Activated CD4-positive, alpha-beta T cell treated with anti-CD3 and anti-CD28 coated beads for 36 hours (primary cell): ENCODE measurements at regions of chr1 and their contacts with region 1.

Region 1: GRCh38 chr1:113759333-113760101 is at the start of gene PHTF1:
- DNase-seq: peak; percentile 77
- ATAC-seq: peak; percentile 81
- H3K4me3 Mint-ChIP-seq: peak within 1 kb of the TSS; percentile 81
- H3K27ac Mint-ChIP-seq: peak within 1 kb of the TSS; percentile 94
- H3K4me1 Mint-ChIP-seq: peaks cover 13% of the 10 kb centered on the region
- H3K27me3 Mint-ChIP-seq: no peaks in the 10 kb centered on the region
- total RNA-seq, gene PHTF1: 11.3 to 12.2 TPM

Region 2: GRCh38 chr1:113677250-113678158 is 82.0 kb before region 1 on chr1:
- CTCF ChIA-PET with region 1: no interaction called
- POLR2A ChIA-PET with region 1: no interaction called
- intact Hi-C with region 1: no loop called
- DNase-seq: no peak
- ATAC-seq: peak; percentile 39
- H3K4me3 Mint-ChIP-seq: no peak overlapping the region
- H3K27ac Mint-ChIP-seq: no peak overlapping the region
- H3K4me1 Mint-ChIP-seq: no peaks in the 10 kb centered on the region
- H3K27me3 Mint-ChIP-seq: no peaks in the 10 kb centered on the region

Region 3: DNA sequence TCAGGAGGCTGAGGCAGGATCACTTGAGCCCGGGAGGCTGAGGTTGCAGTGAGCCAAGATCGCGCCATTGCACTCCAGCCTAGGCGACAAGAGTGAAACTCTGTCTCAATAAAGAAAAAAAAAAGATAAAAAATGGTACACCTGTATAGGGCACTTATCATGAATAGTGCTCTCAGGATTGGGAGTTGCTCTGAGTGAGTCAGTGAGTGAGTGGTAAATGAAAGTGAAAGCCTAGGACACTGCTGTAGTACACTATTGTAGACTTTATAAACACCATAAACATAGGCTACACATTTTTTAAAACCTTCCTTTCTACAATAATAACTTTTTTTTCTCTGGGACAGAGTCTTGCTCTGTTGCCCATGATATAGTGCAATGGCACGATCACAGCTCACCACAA is 17.0 kb before region 1 on chr1:
- CTCF ChIA-PET with region 1: interaction called, 3 read pairs
- POLR2A ChIA-PET with region 1: no interaction called
- intact Hi-C with region 1: loop called in 1 of 2 experiments (anchors 2 kb)
- DNase-seq: no peak
- ATAC-seq: peak; percentile 98
- H3K4me3 Mint-ChIP-seq: no peak overlapping the region
- H3K27ac Mint-ChIP-seq: no peak overlapping the region
- H3K4me1 Mint-ChIP-seq: peaks cover 8% of the 10 kb centered on the region
- H3K27me3 Mint-ChIP-seq: no peaks in the 10 kb centered on the region

Region 4: DNA sequence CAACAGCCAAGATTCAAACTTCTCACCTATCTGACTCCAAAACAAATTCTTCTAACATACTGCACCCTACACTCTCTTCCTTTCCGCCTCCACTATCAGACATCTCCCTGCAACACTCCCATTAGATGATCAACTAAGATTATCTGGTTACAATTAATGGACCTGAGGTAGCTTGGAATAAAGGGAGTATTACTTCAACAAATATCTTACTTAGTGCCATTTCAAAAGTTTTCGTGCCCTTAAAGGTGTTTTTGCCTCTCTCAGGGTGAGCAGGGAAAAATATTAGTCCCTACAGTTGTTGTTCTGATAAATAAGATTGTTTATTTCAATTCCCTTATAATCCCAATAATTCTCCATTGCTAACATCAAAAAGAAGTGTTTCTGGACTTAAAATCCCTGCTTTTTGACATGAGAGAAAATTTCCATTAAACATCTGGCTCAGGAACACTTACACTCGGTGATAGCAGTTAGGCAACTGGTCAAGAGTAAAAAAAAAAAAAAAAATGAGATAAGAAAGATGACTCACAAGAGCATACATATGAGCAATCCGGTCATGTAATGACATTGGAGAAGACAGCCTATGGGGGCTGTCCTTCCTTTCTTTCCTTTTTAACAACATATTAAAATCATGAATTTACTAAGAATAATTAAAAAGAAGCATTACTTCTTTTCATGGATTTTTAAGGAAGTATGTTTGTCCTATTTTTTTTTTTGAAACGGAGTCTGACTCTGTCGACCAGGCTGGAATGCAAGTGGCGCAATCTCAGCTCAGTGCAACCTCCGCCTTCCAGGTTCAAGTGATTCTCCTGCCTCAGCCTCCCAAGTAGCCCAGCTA is 45.1 kb after region 1 on chr1:
- CTCF ChIA-PET with region 1: interaction called, 3 read pairs
- POLR2A ChIA-PET with region 1: no interaction called
- intact Hi-C with region 1: loop called in 1 of 2 experiments (anchors 2 kb)
- DNase-seq: no peak
- ATAC-seq: peak; percentile 40
- H3K4me3 Mint-ChIP-seq: no peak overlapping the region
- H3K27ac Mint-ChIP-seq: no peak overlapping the region
- H3K4me1 Mint-ChIP-seq: peaks cover 80% of the 10 kb centered on the region
- H3K27me3 Mint-ChIP-seq: no peaks in the 10 kb centered on the region

Region 5: GRCh38 chr1:113811888-113812660 is 52.6 kb after region 1 on chr1 and contains the start of gene RSBN1:
- CTCF ChIA-PET with region 1: interaction called, 4 read pairs
- POLR2A ChIA-PET with region 1: no interaction called
- intact Hi-C with region 1: loop called (anchors 1 to 2 kb)
- DNase-seq: peak; percentile 99
- ATAC-seq: peak; percentile 97
- H3K4me3 Mint-ChIP-seq: peak within 1 kb of the TSS; percentile 97
- H3K27ac Mint-ChIP-seq: peak within 1 kb of the TSS; percentile 97
- H3K4me1 Mint-ChIP-seq: peaks cover 33% of the 10 kb centered on the region
- H3K27me3 Mint-ChIP-seq: no peaks in the 10 kb centered on the region
- total RNA-seq, gene RSBN1: 22.1 to 24.3 TPM